CD8-positive, alpha-beta T cell (primary cell): ENCODE measurements at regions of chr2 and their contacts with region 1.

Region 1: DNA sequence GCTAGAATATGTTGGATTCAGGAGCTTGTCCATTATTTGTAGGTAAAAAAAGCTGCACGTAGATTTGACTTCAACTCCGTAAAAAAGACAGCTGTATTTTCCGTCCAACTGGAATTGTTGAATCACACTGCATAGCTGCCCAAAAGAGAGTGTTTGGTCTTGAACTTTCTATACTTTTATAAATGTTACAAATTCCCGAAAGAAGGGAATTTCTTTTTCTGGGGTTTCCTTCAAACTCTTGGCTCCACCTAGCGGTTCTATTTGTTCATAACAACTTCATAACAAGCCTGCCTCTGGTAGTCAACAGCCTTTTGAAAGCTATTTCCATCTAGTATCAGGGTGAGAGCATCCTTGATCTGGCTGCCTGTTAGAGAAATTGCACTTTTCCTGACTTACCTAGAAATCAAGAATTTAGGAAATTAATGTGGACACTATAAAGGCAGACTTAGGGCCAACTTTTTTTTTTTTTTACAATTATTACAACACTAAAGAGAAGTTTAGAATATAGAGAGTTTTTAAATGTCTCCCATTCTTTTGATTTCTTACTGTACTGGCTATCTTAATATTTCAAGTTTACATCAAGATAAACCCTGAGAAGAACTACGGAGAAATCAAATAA is 48.1 kb downstream of the TMEM185B start:
- DNase-seq: peak in 3 of 9 experiments; percentile 26 to 78 (median 70)
- ATAC-seq: no peak
- H3K4me3 ChIP-seq: no peak overlapping the region
- H3K4me3 Mint-ChIP-seq: no peak overlapping the region
- H3K27ac ChIP-seq: peak overlapping the region in 1 of 2 experiments; percentile 1
- H3K27ac Mint-ChIP-seq: peak overlapping the region; percentile 80
- H3K4me1 ChIP-seq: peaks cover 46% of the 10 kb centered on the region
- H3K4me1 Mint-ChIP-seq: peaks cover 49% of the 10 kb centered on the region
- H3K27me3 ChIP-seq: no peaks in the 10 kb centered on the region
- H3K27me3 Mint-ChIP-seq: no peaks in the 10 kb centered on the region
- CTCF ChIP-seq: peak; percentile 94

Region 2: GRCh38 chr2:119641562-119642258 is 533.4 kb before region 1 on chr2:
- CTCF ChIA-PET with region 1: interaction called, 10 read pairs
- POLR2A ChIA-PET with region 1: no interaction called
- intact Hi-C with region 1: loop called (anchors 1 to 2 kb)
- DNase-seq: peak; percentile 49 to 82 (median 69)
- ATAC-seq: peak; percentile 92
- H3K4me3 ChIP-seq: no peak overlapping the region
- H3K4me3 Mint-ChIP-seq: no peak overlapping the region
- H3K27ac ChIP-seq: no peak overlapping the region
- H3K27ac Mint-ChIP-seq: no peak overlapping the region
- H3K4me1 ChIP-seq: no peaks in the 10 kb centered on the region
- H3K4me1 Mint-ChIP-seq: peaks cover 2% of the 10 kb centered on the region
- H3K27me3 ChIP-seq: no peaks in the 10 kb centered on the region
- H3K27me3 Mint-ChIP-seq: peaks cover 10% of the 10 kb centered on the region
- CTCF ChIP-seq: peak; percentile 95

Region 3: GRCh38 chr2:119753041-119753929 is 421.8 kb before region 1 on chr2:
- CTCF ChIA-PET with region 1: interaction called, 63 read pairs
- POLR2A ChIA-PET with region 1: interaction called, 6 read pairs
- intact Hi-C with region 1: loop called in 1 of 2 experiments (anchors 1 kb)
- DNase-seq: peak in 8 of 9 experiments; percentile 7 to 79 (median 33)
- ATAC-seq: peak; percentile 92
- H3K4me3 ChIP-seq: no peak overlapping the region
- H3K4me3 Mint-ChIP-seq: no peak overlapping the region
- H3K27ac ChIP-seq: no peak overlapping the region
- H3K27ac Mint-ChIP-seq: no peak overlapping the region
- H3K4me1 ChIP-seq: no peaks in the 10 kb centered on the region
- H3K4me1 Mint-ChIP-seq: peaks cover 5% of the 10 kb centered on the region
- H3K27me3 ChIP-seq: no peaks in the 10 kb centered on the region
- H3K27me3 Mint-ChIP-seq: no peaks in the 10 kb centered on the region
- CTCF ChIP-seq: peak; percentile 81

Region 4: GRCh38 chr2:119929537-119929936 is 245.5 kb before region 1 on chr2:
- CTCF ChIA-PET with region 1: no interaction called
- POLR2A ChIA-PET with region 1: interaction called, 5 read pairs
- intact Hi-C with region 1: loop called (anchors 2 to 5 kb)
- DNase-seq: peak in 6 of 9 experiments; percentile 15 to 83 (median 26)
- ATAC-seq: peak; percentile 91
- H3K4me3 ChIP-seq: peak overlapping the region; percentile 48 to 63
- H3K4me3 Mint-ChIP-seq: peak overlapping the region; percentile 75
- H3K27ac ChIP-seq: peak overlapping the region; percentile 60 to 70
- H3K27ac Mint-ChIP-seq: peak overlapping the region; percentile 97
- H3K4me1 ChIP-seq: peaks cover 70% of the 10 kb centered on the region
- H3K4me1 Mint-ChIP-seq: peaks cover 73% of the 10 kb centered on the region
- H3K27me3 ChIP-seq: no peaks in the 10 kb centered on the region
- H3K27me3 Mint-ChIP-seq: no peaks in the 10 kb centered on the region
- CTCF ChIP-seq: no peak

Region 5: DNA sequence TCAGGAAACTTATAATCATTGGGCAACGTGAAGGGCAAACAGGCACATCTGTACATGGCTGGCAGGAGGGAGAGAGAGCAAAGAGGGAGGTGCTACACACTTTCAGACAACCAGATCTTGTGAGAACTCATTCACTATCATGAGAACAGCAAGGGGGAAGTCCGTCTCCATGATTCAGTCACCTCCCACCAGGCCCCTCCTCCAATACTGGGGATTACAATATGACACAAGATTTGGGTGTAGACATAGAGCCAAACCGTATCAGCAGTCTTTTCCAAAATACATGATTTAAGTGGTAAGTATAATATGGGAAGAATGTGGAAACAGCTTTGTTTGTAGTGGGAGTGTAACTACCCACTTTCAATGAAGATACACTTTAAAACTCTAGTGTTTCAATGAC is 97.2 kb before region 1 on chr2:
- CTCF ChIA-PET with region 1: no interaction called
- POLR2A ChIA-PET with region 1: no interaction called
- intact Hi-C with region 1: no loop called
- DNase-seq: no peak
- ATAC-seq: no peak
- H3K4me3 ChIP-seq: no peak overlapping the region
- H3K4me3 Mint-ChIP-seq: no peak overlapping the region
- H3K27ac ChIP-seq: no peak overlapping the region
- H3K27ac Mint-ChIP-seq: no peak overlapping the region
- H3K4me1 ChIP-seq: no peaks in the 10 kb centered on the region
- H3K4me1 Mint-ChIP-seq: no peaks in the 10 kb centered on the region
- H3K27me3 ChIP-seq: no peaks in the 10 kb centered on the region
- H3K27me3 Mint-ChIP-seq: no peaks in the 10 kb centered on the region
- CTCF ChIP-seq: no peak

Region 6: GRCh38 chr2:120161190-120161589 is 13.9 kb before region 1 on chr2:
- CTCF ChIA-PET with region 1: interaction called, 20 read pairs
- POLR2A ChIA-PET with region 1: interaction called, 4 read pairs
- intact Hi-C with region 1: no loop called
- DNase-seq: no peak
- ATAC-seq: no peak
- H3K4me3 ChIP-seq: no peak overlapping the region
- H3K4me3 Mint-ChIP-seq: no peak overlapping the region
- H3K27ac ChIP-seq: no peak overlapping the region
- H3K27ac Mint-ChIP-seq: no peak overlapping the region
- H3K4me1 ChIP-seq: no peaks in the 10 kb centered on the region
- H3K4me1 Mint-ChIP-seq: no peaks in the 10 kb centered on the region
- H3K27me3 ChIP-seq: no peaks in the 10 kb centered on the region
- H3K27me3 Mint-ChIP-seq: no peaks in the 10 kb centered on the region
- CTCF ChIP-seq: no peak

Region 7: GRCh38 chr2:120231974-120232635 is 57.0 kb after region 1 on chr2:
- CTCF ChIA-PET with region 1: interaction called, 4 read pairs
- POLR2A ChIA-PET with region 1: interaction called, 9 read pairs
- intact Hi-C with region 1: loop called in 1 of 2 experiments (anchors 2 kb)
- DNase-seq: peak; percentile 27 to 90 (median 64)
- ATAC-seq: peak; percentile 91
- H3K4me3 ChIP-seq: peak overlapping the region; percentile 59 to 66
- H3K4me3 Mint-ChIP-seq: peak overlapping the region; percentile 93
- H3K27ac ChIP-seq: peak overlapping the region; percentile 60 to 84
- H3K27ac Mint-ChIP-seq: peak overlapping the region; percentile 92
- H3K4me1 ChIP-seq: peaks cover 39% of the 10 kb centered on the region
- H3K4me1 Mint-ChIP-seq: peaks cover 57% of the 10 kb centered on the region
- H3K27me3 ChIP-seq: no peaks in the 10 kb centered on the region
- H3K27me3 Mint-ChIP-seq: no peaks in the 10 kb centered on the region
- CTCF ChIP-seq: no peak

Region 8: DNA sequence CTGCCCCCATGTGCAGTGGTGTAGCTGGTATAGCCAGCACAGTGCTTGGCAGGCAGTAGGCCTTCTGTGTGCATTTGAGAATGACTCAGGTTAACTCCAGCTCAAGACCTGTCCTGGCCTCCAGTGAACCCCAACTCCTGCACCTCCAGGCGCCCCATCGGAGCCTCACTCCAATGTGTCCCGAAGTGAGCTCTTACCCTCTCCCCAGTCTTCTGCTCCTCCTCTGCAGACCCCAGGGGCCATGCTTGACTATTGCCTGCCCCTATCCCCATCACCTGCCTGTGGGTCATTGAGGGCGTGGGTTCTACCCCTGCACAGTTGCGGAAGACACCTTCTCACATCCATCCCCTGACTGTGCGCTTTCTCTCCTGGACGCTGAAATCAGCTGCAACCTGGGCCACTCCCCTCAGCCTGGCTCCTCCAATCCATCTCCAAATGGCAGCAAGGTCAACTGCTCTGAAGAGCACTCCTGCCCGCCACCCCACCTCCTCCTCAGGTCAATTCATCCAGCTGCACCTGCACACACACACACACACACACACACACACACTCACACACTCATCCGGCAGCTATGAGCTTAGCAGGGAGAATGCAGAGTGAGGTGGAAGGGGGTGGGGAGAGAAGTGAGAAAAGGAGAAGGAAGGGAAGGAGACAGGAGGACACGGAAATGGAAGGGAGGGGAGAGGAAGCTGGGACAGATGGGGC is 430.3 kb after region 1 on chr2:
- CTCF ChIA-PET with region 1: no interaction called
- POLR2A ChIA-PET with region 1: no interaction called
- intact Hi-C with region 1: no loop called
- DNase-seq: no peak
- ATAC-seq: no peak
- H3K4me3 ChIP-seq: no peak overlapping the region
- H3K4me3 Mint-ChIP-seq: no peak overlapping the region
- H3K27ac ChIP-seq: no peak overlapping the region
- H3K27ac Mint-ChIP-seq: no peak overlapping the region
- H3K4me1 ChIP-seq: no peaks in the 10 kb centered on the region
- H3K4me1 Mint-ChIP-seq: no peaks in the 10 kb centered on the region
- H3K27me3 ChIP-seq: no peaks in the 10 kb centered on the region
- H3K27me3 Mint-ChIP-seq: peaks cover 19% of the 10 kb centered on the region
- CTCF ChIP-seq: no peak